HepG2 (cell line): ENCODE measurements at regions of chr1 and their contacts with region 1.

Region 1: GRCh38 chr1:146049436-146049835 is 27.9 kb upstream of the HJV start:
- DNase-seq: no peak
- ATAC-seq: no peak
- H3K4me3 ChIP-seq: no peak overlapping the region
- H3K27ac ChIP-seq: peak overlapping the region; percentile 94
- H3K4me1 ChIP-seq: peaks cover 69% of the 10 kb centered on the region
- H3K27me3 ChIP-seq: no peaks in the 10 kb centered on the region
- CTCF ChIP-seq: no peak
- EP300 ChIP-seq: no peak
- POLR2A ChIP-seq: no peak
- RAD21 ChIP-seq: no peak

Region 2: DNA sequence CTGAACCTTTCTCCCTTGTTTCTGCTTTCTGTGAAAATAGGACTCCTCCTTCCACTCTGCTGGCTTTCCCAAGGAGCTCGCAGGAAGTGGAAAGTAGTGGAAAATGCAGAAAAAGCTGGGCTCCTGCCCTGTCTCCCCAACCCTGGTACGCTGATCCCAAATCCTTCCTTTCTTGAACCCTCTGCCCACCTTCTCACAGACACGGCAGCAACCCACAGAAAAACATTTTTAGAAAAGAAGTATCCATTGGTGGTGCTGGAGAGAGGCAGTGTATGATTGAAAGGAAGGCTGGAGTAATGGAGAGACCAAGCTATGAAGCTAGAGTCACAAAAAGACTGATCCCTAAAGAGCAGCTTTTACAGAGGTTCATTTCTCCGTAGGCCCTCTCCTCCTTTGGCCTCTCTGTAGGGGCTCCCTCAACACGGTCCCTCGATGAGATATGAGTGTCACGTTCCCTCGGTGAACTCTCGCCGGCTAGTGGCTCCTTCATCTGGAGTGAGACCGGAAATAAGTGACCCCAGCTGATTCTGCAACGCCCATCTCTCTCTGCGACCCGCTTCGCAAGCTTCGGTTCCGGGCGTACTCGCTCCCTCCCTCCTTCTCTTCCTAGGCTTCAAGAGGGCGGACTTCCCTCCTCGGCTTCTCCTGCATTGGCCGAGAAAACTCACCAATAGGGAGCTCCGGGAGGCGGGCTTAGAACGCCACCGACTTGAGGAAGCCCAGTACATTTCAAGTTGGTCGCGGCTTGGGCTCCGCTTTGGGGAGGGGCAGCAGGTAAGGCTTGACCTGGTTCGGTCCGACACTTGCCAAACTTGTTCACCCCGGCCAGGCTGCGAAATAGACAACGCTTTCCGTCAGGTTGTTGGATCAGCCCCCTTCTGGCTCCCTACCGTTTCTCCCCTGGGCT is 85.2 kb before region 1 on chr1 and contains the starts of genes ANKRD34A and POLR3GL:
- CTCF ChIA-PET with region 1: no interaction called
- POLR2A ChIA-PET with region 1: interaction called, 21 read pairs
- in situ Hi-C with region 1: no loop called
- intact Hi-C with region 1: no loop called
- DNase-seq: peak; percentile 92
- ATAC-seq: peak; percentile 88
- H3K4me3 ChIP-seq: peak within 1 kb of the TSS; percentile 77 to 84 (median 82)
- H3K27ac ChIP-seq: peak within 1 kb of the TSS; percentile 70
- H3K4me1 ChIP-seq: peaks cover 45% of the 10 kb centered on the region
- H3K27me3 ChIP-seq: peaks cover 0 to 28% of the 10 kb centered on the region in 2 experiments; a peak in 3 of 5 replicates
- CTCF ChIP-seq: peak; percentile 22
- EP300 ChIP-seq: no peak
- POLR2A ChIP-seq: peak; percentile 57 to 85
- RAD21 ChIP-seq: 0 out of 2 replicates have a peak, but pooled peaks have one; percentile 29
- total RNA-seq, gene ANKRD34A: 0.07 and 0.14 TPM in 2 replicates
- total RNA-seq, gene POLR3GL: 12.4 and 15.3 TPM in 2 replicates

Region 3: DNA sequence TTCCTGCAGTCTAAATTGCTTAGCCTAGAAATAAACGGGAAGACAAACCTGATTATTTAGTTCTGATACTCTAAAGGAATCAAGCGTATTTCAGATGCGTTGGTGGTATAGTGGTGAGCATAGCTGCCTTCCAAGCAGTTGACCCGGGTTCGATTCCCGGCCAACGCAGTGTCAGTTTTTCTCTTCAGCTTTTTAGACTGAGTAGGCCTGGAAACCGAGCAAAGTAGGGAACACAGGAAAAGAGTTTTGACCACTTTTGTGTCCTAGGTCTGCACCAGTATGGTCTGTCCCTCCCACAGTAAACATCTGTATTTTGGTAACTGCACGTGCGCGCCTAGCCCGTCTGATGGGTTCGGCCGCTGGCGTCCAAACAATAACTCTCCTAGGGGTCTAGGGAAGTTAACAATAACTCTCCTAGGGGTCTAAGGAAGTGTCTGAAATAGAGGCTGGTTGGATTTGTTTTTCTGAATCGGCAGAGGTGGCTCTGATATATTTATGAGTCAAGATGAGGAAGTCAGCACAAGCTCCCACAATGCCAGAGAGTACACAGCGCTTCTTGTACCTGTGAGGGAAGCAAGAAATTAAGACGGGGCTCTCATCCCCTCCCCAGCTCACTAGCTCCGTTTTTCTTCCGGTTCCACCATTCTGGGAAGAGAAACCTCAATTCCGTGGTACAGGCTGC is 12.3 kb before region 1 on chr1:
- CTCF ChIA-PET with region 1: no interaction called
- POLR2A ChIA-PET with region 1: interaction called, 297 read pairs
- in situ Hi-C with region 1: no loop called
- intact Hi-C with region 1: loop called (anchors 1 kb)
- DNase-seq: peak; percentile 90
- ATAC-seq: peak; percentile 69
- H3K4me3 ChIP-seq: peak overlapping the region; percentile 73 to 86 (median 84)
- H3K27ac ChIP-seq: peak overlapping the region; percentile 89
- H3K4me1 ChIP-seq: peaks cover 45% of the 10 kb centered on the region
- H3K27me3 ChIP-seq: no peaks in the 10 kb centered on the region; a peak in 1 of 5 replicates
- CTCF ChIP-seq: no peak
- EP300 ChIP-seq: no peak
- POLR2A ChIP-seq: no peak
- RAD21 ChIP-seq: no peak